Panc1 (cell line): ENCODE measurements at regions of chr15 and their contacts with region 1.

Region 1: GRCh38 chr15:38024293-38025091 is 90.1 kb downstream of the TMCO5A start:
- DNase-seq: no peak
- ATAC-seq: no peak
- H3K4me3 ChIP-seq: no peak overlapping the region
- H3K27ac ChIP-seq: no peak overlapping the region
- H3K4me1 ChIP-seq: no peaks in the 10 kb centered on the region
- H3K27me3 ChIP-seq: no peaks in the 10 kb centered on the region
- CTCF ChIP-seq: no peak

Region 2: DNA sequence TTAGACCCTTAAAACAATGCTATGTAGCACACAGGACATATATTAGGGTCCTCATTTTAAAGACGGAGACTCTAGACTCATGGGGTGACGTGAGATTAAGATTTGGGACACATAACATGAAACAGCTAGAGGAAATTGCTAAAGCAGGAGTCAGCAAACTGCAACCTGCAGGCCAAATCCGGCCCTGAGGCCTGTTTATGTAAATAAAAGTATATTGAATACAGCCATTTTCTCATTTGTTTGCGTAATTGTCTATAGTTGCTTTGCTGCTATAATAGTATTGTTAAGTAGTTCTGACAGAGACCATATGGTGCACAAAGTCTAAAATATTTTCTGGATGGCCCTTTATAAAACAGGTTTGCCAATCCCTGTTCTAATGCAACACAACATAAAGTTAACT is 25.4 kb after region 1 on chr15:
- CTCF ChIA-PET with region 1: no interaction called
- POLR2A ChIA-PET with region 1: no interaction called
- in situ Hi-C with region 1: no loop called
- intact Hi-C with region 1: loop called (anchors 1 kb)
- DNase-seq: no peak
- ATAC-seq: no peak
- H3K4me3 ChIP-seq: no peak overlapping the region
- H3K27ac ChIP-seq: no peak overlapping the region
- H3K4me1 ChIP-seq: no peaks in the 10 kb centered on the region
- H3K27me3 ChIP-seq: no peaks in the 10 kb centered on the region
- CTCF ChIP-seq: no peak